ENCODE measurements at regions of chr20 and their contacts with region 1.

Region 1: DNA sequence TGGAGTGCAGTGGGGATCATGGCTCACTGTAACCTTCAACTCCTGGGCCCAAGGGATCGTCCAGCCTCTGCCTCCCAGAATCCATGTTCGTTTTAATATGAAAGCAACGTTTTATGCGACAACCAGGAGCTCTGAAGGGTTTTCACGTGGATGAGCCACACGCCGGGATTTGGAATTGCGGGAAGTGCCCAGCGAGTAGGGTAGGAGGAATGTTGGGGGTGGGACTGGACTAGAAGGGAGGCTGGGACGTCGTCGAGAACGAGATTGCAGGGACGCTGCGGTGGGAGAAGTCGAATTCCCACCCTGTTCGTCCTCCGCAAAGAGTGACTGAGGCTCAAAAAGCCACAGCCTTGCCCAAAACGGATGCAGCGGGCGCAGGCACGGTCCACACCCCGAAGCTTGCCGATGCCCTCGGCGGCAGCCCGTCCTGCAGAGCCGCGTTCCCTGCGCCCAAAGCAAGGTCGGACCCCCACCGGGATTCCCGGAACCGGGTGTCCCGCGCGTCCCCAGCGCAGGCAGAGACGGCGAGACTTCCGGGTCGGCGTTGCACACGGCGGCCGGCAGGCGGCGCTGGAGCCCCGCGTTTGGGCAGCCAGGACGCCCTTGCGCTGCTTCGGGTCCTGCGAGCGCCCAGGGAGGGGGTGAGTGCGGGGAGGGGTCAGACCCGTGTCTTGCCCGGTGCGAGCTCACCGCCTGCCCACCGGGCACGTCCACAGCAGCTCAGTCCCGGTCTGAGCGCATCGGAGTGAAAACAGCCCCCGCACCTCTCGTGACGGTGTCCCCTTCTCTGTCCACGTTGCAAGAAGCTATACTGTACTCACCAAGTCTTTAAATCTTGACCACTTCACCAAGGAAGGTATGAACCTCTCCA is 87.8 kb downstream of the DHX35 start:
- DNase-seq: peak; percentile 91
- H3K4me3 Mint-ChIP-seq: peak overlapping the region; percentile 82
- H3K27ac Mint-ChIP-seq: peak overlapping the region; percentile 66
- H3K4me1 Mint-ChIP-seq: no peaks in the 10 kb centered on the region
- H3K27me3 Mint-ChIP-seq: peaks cover 48% of the 10 kb centered on the region
- CTCF ChIP-seq: peak; percentile 99

Region 2: GRCh38 chr20:38645980-38646858 is 403.7 kb before region 1 on chr20:
- CTCF ChIA-PET with region 1: interaction called, 4 read pairs
- intact Hi-C with region 1: loop called (anchors 5 kb)
- DNase-seq: peak; percentile 95
- H3K4me3 Mint-ChIP-seq: peak overlapping the region; percentile 59
- H3K27ac Mint-ChIP-seq: no peak overlapping the region
- H3K4me1 Mint-ChIP-seq: no peaks in the 10 kb centered on the region
- H3K27me3 Mint-ChIP-seq: no peaks in the 10 kb centered on the region
- CTCF ChIP-seq: peak; percentile 99

Region 3: GRCh38 chr20:38825901-38826625 is 223.9 kb before region 1 on chr20:
- CTCF ChIA-PET with region 1: interaction called, 11 read pairs
- intact Hi-C with region 1: no loop called
- DNase-seq: peak; percentile 53
- H3K4me3 Mint-ChIP-seq: no peak overlapping the region
- H3K27ac Mint-ChIP-seq: no peak overlapping the region
- H3K4me1 Mint-ChIP-seq: peaks cover 34% of the 10 kb centered on the region
- H3K27me3 Mint-ChIP-seq: peaks cover 41% of the 10 kb centered on the region
- CTCF ChIP-seq: no peak

Region 4: DNA sequence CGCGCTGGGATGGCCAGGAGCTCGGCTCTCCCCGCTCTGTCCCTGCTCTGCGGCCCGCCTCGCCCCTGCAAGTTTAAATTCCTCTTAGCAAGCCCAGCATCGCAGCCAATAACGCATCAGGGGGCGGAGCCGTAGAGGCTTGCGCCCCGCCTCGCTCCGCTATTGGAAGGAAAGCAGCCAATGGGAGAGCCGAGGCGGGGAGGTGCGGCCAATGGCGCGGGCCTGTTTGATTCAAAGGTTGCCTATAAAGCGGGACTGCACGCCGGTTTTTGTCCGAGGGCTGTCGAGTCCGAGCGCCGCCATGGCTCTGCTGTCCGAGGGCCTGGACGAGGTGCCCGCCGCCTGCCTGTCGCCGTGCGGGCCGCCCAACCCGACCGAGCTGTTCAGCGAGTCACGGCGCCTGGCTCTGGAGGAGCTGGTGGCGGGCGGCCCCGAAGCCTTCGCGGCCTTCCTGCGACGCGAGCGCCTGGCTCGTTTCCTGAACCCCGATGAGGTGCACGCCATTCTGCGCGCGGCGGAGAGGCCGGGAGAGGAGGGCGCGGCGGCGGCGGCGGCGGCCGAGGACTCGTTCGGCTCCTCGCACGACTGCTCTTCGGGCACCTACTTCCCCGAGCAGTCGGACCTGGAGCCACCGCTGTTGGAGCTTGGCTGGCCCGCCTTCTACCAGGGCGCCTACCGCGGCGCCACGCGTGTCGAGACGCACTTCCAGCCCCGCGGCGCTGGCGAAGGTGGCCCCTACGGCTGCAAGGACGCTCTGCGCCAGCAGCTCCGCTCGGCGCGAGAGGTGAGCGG is 123.6 kb before region 1 on chr20 and contains the start of gene FAM83D:
- CTCF ChIA-PET with region 1: interaction called, 5 read pairs
- intact Hi-C with region 1: loop called (anchors 1 kb)
- DNase-seq: peak; percentile 100
- H3K4me3 Mint-ChIP-seq: peak within 1 kb of the TSS; percentile 78
- H3K27ac Mint-ChIP-seq: peak within 1 kb of the TSS; percentile 75
- H3K4me1 Mint-ChIP-seq: peaks cover 47% of the 10 kb centered on the region
- H3K27me3 Mint-ChIP-seq: peaks cover 5% of the 10 kb centered on the region
- CTCF ChIP-seq: no peak
- total RNA-seq, gene FAM83D: 73.0 and 84.0 TPM in 2 replicates

Region 5: DNA sequence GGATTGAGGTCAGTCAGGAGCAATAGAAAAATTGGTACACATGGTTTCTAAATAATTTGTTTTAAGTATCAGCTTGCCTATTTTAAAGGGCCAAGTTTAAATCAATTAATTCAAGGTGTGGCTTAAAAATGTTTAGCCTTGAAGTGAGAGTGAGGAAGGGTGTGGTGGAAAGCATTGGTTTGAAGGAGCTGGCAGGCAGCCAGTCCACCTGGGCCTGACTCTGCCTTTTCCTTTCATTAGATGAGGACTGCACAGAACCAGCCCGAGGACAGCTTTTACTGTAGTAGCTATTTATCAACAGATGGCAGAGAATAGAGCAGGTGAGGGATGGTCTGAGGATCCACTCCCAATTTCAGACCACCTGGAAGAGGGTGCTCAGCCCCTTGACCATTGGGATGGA is 45.4 kb before region 1 on chr20:
- CTCF ChIA-PET with region 1: interaction called, 8 read pairs
- intact Hi-C with region 1: loop called (anchors 1 kb)
- DNase-seq: peak; percentile 87
- H3K4me3 Mint-ChIP-seq: no peak overlapping the region
- H3K27ac Mint-ChIP-seq: no peak overlapping the region
- H3K4me1 Mint-ChIP-seq: peaks cover 26% of the 10 kb centered on the region
- H3K27me3 Mint-ChIP-seq: no peaks in the 10 kb centered on the region
- CTCF ChIP-seq: no peak

Region 6: DNA sequence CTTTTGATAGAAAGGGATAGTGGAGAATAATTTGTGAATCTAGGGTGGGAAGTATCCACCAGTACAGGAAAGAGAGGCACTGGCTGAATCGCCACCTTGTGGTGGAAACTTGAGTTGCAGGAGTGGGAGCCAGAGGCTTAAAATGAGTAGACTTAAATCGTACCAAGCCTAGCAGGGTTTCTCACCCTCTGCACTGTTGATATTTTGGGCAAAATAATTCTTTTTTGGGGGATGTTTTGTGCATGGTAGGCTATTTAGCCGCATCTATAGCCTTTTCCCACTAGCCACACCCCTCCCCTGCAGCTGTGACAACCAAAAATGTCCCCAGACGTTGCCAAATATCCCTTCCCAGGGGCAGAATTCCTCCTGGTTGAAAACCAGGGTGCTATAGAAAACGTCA is 31.3 kb after region 1 on chr20:
- CTCF ChIA-PET with region 1: interaction called, 25 read pairs
- intact Hi-C with region 1: loop called (anchors 1 kb)
- DNase-seq: peak; percentile 93
- H3K4me3 Mint-ChIP-seq: no peak overlapping the region
- H3K27ac Mint-ChIP-seq: no peak overlapping the region
- H3K4me1 Mint-ChIP-seq: no peaks in the 10 kb centered on the region
- H3K27me3 Mint-ChIP-seq: peaks cover 87% of the 10 kb centered on the region
- CTCF ChIP-seq: peak; percentile 92

Region 7: GRCh38 chr20:39462416-39462945 is 412.6 kb after region 1 on chr20:
- CTCF ChIA-PET with region 1: interaction called, 11 read pairs
- intact Hi-C with region 1: no loop called
- DNase-seq: no peak
- H3K4me3 Mint-ChIP-seq: no peak overlapping the region
- H3K27ac Mint-ChIP-seq: no peak overlapping the region
- H3K4me1 Mint-ChIP-seq: no peaks in the 10 kb centered on the region
- H3K27me3 Mint-ChIP-seq: no peaks in the 10 kb centered on the region
- CTCF ChIP-seq: no peak